Activated B cell treated with CpG ODN at 0.5 μM for 24 hours (primary cell): ENCODE measurements at regions of chr17 and their contacts with region 1.

Region 1: DNA sequence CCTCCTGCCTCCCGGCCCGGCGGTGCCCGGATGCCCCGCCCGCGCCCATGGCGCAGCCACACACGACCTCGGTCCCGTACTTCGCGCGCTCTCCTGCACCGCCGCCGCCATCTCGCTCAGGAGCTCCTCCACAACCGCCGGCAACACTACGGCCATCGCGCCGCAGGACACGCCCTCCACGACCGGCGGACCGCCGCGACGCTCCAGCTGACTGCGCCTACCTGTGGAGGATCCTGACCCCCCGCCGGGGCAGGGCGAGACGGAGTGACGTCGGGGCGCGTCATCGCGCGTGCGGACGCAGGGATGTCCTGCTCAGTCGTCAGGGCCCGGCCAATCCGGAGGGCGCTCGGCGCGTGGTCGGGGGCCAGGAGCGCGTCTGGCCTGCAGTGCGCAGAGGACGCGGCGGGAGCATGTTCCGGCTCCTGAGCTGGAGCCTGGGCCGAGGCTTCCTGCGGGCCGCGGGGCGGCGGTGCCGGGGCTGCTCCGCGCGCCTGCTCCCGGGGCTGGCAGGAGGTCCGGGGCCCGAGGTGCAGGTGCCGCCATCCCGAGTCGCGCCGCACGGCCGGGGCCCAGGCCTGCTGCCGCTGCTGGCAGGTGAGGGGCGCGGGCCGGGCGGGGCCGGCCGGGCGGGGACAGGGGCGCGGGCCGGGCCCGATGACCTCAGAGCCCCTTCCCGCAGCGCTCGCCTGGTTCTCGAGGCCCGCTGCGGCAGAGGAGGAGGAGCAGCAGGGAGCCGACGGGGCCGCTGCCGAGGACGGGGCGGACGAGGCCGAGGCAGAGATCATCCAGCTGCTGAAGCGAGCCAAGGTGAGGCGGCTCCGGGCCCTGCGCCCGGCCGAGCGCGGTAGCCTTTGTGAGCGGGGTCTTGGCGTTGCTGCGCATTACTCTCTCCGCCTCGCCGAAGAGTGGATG is at the starts of genes TTC19 and ZSWIM7:
- DNase-seq: peak; percentile 92
- ATAC-seq: peak; percentile 87
- H3K4me3 Mint-ChIP-seq: peak within 1 kb of the TSS; percentile 97
- H3K27ac Mint-ChIP-seq: peak within 1 kb of the TSS; percentile 96
- H3K4me1 Mint-ChIP-seq: peaks cover 28% of the 10 kb centered on the region
- H3K27me3 Mint-ChIP-seq: no peaks in the 10 kb centered on the region
- CTCF ChIP-seq: no peak
- total RNA-seq, gene TTC19: 29.7 and 34.2 TPM in 2 replicates
- total RNA-seq, gene ZSWIM7: 15.0 and 18.1 TPM in 2 replicates

Region 2: DNA sequence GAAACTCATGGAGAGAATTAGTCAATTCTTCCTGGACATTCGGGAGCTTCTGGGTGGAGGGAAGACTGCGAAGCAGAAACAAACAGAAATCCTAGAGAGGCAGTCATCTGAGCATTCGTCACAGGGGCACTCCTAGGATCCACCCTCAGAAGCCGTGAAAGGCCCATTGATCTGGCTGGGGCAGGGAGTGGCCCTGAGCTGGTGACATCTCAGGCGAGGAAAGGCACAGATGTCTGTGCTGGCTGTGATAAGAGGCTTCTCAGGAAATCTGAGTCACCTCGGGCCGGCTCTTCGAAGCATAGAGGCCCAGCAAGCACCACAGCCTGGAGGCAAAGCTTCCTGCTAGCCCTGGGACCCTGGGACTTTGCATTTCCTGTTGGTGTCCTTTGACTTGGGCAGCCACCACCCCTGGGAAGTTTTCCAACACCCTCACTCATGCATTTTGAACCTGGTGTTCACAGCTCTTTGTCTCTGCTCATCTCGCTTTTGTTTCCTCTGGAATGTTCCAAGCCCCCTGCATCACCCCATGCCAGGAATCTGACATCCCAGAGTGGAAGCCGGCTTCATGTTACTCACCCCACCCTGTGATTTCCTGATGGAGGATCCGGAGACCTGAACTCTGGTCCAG is 508.9 kb before region 1 on chr17:
- CTCF ChIA-PET with region 1: no interaction called
- POLR2A ChIA-PET with region 1: no interaction called
- intact Hi-C with region 1: no loop called
- DNase-seq: no peak
- ATAC-seq: no peak
- H3K4me3 Mint-ChIP-seq: no peak overlapping the region
- H3K27ac Mint-ChIP-seq: no peak overlapping the region
- H3K4me1 Mint-ChIP-seq: no peaks in the 10 kb centered on the region
- H3K27me3 Mint-ChIP-seq: no peaks in the 10 kb centered on the region
- CTCF ChIP-seq: no peak

Region 3: DNA sequence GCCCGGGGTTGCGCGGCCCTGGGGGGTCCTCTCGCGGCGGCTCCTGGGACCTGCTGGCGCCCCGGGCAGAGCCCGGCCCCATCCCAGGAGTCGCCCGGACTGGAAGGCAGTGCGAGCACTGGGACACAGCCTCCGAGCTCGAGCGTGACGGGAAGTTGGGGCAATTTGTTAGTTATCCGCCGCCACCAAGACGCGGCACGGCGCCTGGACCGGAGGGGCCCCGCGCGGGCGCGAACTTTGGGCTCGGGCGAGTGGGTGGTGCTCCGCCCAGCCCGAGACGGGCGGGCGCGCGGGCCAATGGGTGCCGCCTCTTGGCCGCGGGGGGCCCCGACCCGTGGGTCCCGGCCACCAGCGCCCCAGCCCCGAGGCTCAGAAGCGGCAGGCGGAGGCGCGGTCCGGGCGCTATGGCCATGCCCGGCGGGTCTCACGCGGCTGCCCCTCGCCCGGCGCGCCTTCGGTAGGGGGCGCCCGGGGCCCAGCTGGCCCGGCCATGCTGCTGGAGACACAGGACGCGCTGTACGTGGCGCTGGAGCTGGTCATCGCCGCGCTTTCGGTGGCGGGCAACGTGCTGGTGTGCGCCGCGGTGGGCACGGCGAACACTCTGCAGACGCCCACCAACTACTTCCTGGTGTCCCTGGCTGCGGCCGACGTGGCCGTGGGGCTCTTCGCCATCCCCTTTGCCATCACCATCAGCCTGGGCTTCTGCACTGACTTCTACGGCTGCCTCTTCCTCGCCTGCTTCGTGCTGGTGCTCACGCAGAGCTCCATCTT is 54.8 kb before region 1 on chr17 and contains the start of gene ADORA2B:
- CTCF ChIA-PET with region 1: interaction called, 14 read pairs
- POLR2A ChIA-PET with region 1: interaction called, 6 read pairs
- intact Hi-C with region 1: loop called (anchors 1 kb)
- DNase-seq: peak; percentile 47
- ATAC-seq: peak; percentile 63
- H3K4me3 Mint-ChIP-seq: peak within 1 kb of the TSS; percentile 80
- H3K27ac Mint-ChIP-seq: no peak within 1 kb of the TSS
- H3K4me1 Mint-ChIP-seq: peaks cover 12% of the 10 kb centered on the region
- H3K27me3 Mint-ChIP-seq: peaks cover 41% of the 10 kb centered on the region
- CTCF ChIP-seq: no peak
- total RNA-seq, gene ADORA2B: not detected in 2 replicates

Region 4: DNA sequence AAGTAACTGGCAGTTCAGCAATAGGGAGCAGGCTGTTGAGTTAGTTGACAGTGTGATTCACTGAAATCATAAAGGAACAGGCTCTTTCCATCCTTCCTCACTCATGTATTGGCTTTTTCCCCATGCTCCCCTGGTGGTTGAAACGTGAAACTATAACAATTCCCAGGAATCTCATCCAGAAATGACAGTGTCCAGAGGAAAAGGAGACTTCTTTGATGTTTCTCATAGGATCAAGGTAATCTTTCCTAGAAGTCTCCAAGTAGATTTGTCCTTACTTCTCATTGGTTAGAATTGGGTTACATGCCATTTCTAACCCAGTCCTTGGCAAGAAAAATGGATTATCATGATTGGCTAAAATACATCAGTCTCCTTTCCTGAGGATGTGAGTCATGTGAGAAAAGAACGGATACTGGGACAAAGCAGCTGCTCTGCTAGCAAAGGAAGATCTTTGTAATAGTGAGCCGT is 14.3 kb after region 1 on chr17:
- CTCF ChIA-PET with region 1: interaction called, 3 read pairs
- POLR2A ChIA-PET with region 1: interaction called, 10 read pairs
- intact Hi-C with region 1: no loop called
- DNase-seq: no peak
- ATAC-seq: no peak
- H3K4me3 Mint-ChIP-seq: no peak overlapping the region
- H3K27ac Mint-ChIP-seq: no peak overlapping the region
- H3K4me1 Mint-ChIP-seq: no peaks in the 10 kb centered on the region
- H3K27me3 Mint-ChIP-seq: no peaks in the 10 kb centered on the region
- CTCF ChIP-seq: no peak